ENCODE measurements at regions of chr1 and their contacts with region 1.

Region 1: DNA sequence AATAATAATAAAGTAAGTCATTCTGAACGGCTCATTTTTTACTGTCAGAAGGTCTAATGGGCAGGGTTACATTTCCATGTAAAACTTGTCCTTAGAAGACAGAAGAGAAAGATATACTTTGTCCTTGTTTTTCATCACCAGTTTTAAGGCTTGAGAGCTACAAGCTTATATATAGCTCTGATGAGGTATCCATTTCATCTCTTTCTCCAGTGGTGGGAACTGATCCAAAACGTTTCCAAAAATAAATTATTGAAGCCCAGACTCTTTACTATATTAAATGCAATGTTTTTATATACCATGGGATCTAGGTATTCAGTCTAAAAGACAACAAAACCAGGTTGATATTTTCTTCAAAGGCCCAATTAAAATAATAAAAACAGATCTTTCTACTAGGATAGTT is 8.7 kb downstream of the B3GALNT2 start:
- DNase-seq: no peak
- H3K4me3 Mint-ChIP-seq: no peak overlapping the region
- H3K27ac Mint-ChIP-seq: no peak overlapping the region
- H3K4me1 Mint-ChIP-seq: peaks cover 22% of the 10 kb centered on the region
- H3K27me3 Mint-ChIP-seq: no peaks in the 10 kb centered on the region
- CTCF ChIP-seq: no peak

Region 2: GRCh38 chr1:235468970-235469369 is 26.6 kb before region 1 on chr1:
- CTCF ChIA-PET with region 1: interaction called, 4 read pairs
- POLR2A ChIA-PET with region 1: interaction called, 16 read pairs
- intact Hi-C with region 1: no loop called
- DNase-seq: peak; percentile 80
- H3K4me3 Mint-ChIP-seq: no peak overlapping the region
- H3K27ac Mint-ChIP-seq: peak overlapping the region; percentile 61
- H3K4me1 Mint-ChIP-seq: peaks cover 6% of the 10 kb centered on the region
- H3K27me3 Mint-ChIP-seq: no peaks in the 10 kb centered on the region
- CTCF ChIP-seq: no peak